ENCODE measurements at regions of chr3 and their contacts with region 1.

Region 1: DNA sequence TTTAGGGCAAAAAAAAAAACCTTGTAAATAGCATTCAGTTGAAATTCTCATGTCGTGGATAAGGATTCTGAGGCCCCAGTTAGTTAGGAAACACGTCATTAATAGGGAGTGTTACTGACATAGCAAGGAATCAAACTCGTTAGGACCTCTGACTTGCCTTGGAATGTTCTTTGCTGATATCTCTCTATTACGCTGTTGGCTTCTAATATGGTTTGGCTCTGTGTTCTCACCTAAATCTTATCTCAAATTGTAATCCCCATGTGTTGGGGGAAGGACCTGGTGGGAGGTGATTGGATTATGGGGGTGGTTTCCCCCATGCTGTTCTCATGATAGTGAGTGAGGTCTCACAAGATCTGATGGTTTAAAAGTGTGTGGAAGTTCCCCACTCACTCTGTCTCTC is 40.3 kb downstream of the CHL1 start:
- DNase-seq: no peak
- H3K4me3 ChIP-seq: no peak overlapping the region
- CTCF ChIP-seq: no peak

Region 2: GRCh38 chr3:63095-63765 is 173.7 kb before region 1 on chr3:
- in situ Hi-C with region 1: no loop called
- DNase-seq: peak; percentile 46
- H3K4me3 ChIP-seq: no peak overlapping the region
- CTCF ChIP-seq: no peak

Region 3: DNA sequence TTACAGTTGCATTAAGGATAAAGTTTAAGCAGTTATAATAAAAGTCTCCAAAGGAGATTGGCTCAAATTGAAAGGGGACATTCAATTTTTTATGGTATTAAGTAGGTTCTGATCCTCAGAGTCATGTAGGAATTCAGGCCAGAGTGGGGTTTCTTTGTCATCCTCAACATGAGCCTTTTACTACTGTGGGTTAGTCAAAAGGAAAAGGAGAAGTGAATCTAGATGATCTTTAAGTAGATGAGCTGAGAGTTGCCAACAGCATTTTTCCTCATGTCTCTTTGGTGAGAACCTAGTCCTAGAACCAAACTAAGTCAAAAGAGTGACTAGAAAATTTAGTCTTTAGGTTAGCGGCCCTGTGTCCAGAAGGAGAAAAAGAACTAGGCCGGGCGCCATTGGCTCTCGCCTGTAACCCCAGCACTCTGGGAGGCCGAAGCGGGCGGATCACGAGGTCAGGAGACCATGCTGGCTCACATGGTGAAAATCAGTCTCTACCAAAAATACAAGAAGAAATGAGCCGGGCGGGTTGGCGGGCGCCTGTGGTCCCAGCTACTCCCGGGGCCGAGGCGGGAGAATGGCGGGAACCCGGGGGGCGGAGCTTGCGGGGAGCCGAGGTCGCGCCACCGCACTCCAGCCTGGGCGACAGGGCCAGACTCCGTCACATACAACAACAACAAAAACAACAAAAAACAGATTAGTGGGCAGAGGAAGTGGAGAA is 44.5 kb before region 1 on chr3:
- in situ Hi-C with region 1: no loop called
- DNase-seq: no peak
- H3K4me3 ChIP-seq: no peak overlapping the region
- CTCF ChIP-seq: no peak

Region 4: GRCh38 chr3:324423-324822 is 87.5 kb after region 1 on chr3:
- in situ Hi-C with region 1: loop called (anchors 5 kb)
- DNase-seq: no peak
- H3K4me3 ChIP-seq: no peak overlapping the region
- CTCF ChIP-seq: no peak

Region 5: DNA sequence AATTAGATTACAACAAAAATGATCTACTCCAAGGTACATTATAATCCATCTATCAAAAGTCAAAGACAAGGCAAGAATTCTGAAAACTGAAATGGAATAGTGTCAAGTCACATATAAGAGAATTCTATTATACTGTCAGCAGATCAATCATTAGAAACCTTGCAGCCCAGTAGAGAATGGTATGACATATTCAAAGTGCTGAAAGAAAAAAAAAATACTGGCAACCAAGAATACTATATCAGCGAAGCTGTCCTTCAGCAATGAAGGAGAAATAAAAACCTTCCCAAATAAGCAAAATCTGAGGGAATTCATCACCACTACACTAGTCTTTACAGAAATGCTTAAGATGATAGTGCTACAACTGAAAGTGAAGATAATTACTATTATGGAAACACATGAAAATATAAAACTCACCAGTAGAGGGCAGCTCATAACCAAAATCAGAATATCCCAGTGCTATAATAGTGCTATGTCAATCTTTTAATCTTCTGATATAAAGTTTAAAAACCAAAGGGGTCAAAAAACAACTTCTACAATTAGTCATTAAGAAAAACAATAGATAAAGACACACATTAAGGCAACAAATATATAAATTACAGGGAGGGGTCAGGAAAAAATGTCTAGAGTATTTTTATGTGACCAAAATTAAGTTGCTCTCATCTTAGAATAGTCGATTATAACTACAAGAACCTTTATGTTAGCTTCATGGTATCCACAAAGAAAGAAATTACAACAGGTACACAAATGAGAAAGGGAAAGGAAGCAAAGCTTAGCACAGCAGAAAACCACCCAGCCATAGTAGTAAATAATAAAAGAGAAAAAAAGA is 665.3 kb after region 1 on chr3:
- in situ Hi-C with region 1: no loop called
- DNase-seq: no peak
- H3K4me3 ChIP-seq: no peak overlapping the region
- CTCF ChIP-seq: peak; percentile 20

Measured in astrocyte of the cerebellum (primary cell).